OCI-LY7 (cell line): ENCODE measurements at regions of chr16 and their contacts with region 1.

Region 1: DNA sequence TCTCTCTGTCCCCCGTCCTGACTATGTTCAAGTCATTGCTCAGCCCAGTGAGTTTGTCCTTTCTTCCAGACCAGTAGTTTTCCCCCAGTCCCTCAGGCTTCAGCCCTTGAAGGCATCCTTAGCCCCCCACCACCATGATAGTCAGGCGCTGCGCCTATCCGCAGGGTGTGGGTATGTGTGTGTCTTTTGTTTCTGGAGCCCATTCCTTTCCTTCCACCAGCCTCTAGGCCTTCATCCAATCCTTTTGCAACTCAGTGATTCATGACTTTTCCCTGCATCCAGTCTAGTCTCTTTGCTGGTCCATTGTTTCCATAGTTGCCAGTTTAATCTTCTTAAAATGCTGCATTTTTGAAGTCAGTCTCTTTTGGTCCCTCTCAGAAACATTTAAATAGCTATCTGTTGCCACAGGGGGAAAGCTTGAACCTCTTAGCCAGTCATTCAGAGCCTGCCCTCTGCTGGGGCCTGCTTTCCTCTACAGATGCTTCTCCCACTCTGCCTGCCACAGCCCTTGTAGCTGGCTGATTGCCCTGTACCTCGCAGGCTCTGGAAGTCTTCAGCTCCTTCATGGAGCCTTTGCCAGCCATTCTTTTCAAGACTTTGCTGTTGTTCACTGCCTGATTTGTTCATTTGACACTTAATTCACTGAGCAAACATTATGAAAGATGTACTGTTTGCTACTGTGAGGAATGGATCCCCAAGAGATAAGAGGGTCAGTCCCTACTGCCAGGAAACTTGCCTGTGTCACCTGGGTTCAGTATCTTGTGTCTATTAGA is 55.9 kb upstream of the ADCY7 start:
- DNase-seq: peak; percentile 77
- H3K4me3 ChIP-seq: no peak overlapping the region
- H3K27ac ChIP-seq: no peak overlapping the region
- H3K4me1 ChIP-seq: peaks cover 12% of the 10 kb centered on the region
- CTCF ChIP-seq: peak; percentile 86

Region 2: GRCh38 chr16:50024684-50025536 is 185.5 kb before region 1 on chr16 and contains the start of gene CNEP1R1:
- CTCF ChIA-PET with region 1: interaction called, 30 read pairs
- POLR2A ChIA-PET with region 1: interaction called, 3 read pairs
- intact Hi-C with region 1: loop called (anchors 1 kb)
- DNase-seq: peak; percentile 96
- H3K4me3 ChIP-seq: peak within 1 kb of the TSS; percentile 98
- H3K27ac ChIP-seq: peak within 1 kb of the TSS; percentile 38
- H3K4me1 ChIP-seq: peaks cover 14% of the 10 kb centered on the region
- CTCF ChIP-seq: peak; percentile 99
- total RNA-seq, gene CNEP1R1: 19.9 and 23.1 TPM in 2 replicates

Region 3: DNA sequence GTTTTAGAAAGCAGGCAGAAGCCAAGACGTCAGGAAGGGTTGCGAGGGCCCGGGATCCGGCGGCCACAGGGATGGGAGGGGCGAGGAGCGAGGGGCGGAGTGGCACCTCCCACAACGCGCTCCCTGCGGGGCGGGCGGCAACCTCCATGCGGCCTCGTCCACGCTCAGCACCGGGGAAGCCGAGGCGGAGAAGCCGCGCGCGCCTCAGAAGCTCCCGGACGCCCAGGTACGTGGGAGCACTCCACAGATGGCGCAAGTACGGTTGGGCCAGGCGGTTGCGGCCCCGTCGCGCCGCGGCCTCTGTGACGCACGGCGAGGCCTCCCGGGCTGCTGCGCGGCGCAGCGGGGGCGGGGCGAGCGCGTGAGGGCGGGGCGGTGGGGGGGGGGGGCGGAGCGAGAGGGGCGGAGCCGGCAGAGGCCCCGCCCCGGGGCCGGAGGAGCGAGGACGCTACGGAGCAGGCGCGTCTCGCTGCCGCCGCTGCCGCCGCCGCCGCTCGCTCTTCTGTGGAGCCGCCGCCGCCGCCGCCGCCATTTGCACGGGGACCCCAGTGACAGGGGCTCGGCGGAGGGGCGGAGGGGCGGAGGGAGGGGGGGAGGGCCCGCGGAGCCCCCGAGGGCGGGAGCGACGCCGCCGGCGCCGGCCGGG is 57.5 kb before region 1 on chr16 and contains the start of gene TENT4B:
- CTCF ChIA-PET with region 1: no interaction called
- POLR2A ChIA-PET with region 1: interaction called, 3 read pairs
- intact Hi-C with region 1: loop called (anchors 5 kb)
- DNase-seq: peak; percentile 83
- H3K4me3 ChIP-seq: peak within 1 kb of the TSS; percentile 95
- H3K27ac ChIP-seq: peak within 1 kb of the TSS; percentile 73
- H3K4me1 ChIP-seq: peaks cover 27% of the 10 kb centered on the region
- CTCF ChIP-seq: no peak
- total RNA-seq, gene TENT4B: 5.6 and 5.8 TPM in 2 replicates

Region 4: DNA sequence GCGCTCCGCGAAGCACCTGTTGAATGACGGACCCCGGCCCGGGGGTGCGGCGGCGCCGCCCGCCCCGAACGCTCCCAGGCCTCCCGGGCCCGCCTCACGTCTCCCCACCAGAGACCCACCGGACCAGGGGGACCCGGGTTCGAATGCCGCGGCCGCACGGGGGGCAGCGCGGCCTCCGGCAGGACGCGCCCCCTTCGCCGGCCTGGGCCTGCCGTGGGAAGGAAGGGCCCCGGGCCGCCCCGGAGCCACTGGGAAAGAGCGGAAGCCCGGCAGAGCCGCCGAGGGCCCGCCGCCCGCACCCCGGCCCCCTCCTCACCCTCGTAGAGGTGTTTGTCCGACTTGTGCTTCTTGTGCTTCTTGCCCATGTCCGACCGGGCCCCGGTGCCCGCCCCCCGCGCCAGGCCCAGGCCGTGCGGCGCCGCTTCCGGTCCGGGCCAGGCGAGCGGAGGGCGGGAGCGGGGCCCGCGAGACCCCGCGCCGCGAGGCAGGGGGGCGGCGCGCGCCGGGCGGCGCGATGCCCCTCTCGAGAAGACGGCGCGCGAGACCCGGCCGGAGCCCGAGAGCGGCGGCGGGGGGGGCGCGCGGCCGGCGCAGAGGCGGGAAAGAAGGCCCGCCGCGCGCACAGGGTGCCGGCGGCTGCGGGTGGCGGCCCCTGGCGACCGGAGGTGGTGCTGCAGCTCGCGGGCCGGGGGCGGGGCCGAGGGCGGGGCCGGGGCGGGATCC is 158.1 kb after region 1 on chr16 and contains the start of gene BRD7:
- CTCF ChIA-PET with region 1: no interaction called
- POLR2A ChIA-PET with region 1: no interaction called
- intact Hi-C with region 1: loop called (anchors 5 kb)
- DNase-seq: peak; percentile 82
- H3K4me3 ChIP-seq: peak within 1 kb of the TSS; percentile 100
- H3K27ac ChIP-seq: peak within 1 kb of the TSS; percentile 32
- H3K4me1 ChIP-seq: peaks cover 27% of the 10 kb centered on the region
- CTCF ChIP-seq: no peak
- total RNA-seq, gene BRD7: 78.5 and 90.0 TPM in 2 replicates

Region 5: GRCh38 chr16:50806099-50807062 is 595.9 kb after region 1 on chr16:
- CTCF ChIA-PET with region 1: no interaction called
- POLR2A ChIA-PET with region 1: no interaction called
- intact Hi-C with region 1: loop called (anchors 10 kb)
- DNase-seq: peak; percentile 88
- H3K4me3 ChIP-seq: peak overlapping the region; percentile 45
- H3K27ac ChIP-seq: no peak overlapping the region
- H3K4me1 ChIP-seq: no peaks in the 10 kb centered on the region
- CTCF ChIP-seq: peak; percentile 99